ENCODE measurements at regions of chr17 and their contacts with region 1.

Region 1: DNA sequence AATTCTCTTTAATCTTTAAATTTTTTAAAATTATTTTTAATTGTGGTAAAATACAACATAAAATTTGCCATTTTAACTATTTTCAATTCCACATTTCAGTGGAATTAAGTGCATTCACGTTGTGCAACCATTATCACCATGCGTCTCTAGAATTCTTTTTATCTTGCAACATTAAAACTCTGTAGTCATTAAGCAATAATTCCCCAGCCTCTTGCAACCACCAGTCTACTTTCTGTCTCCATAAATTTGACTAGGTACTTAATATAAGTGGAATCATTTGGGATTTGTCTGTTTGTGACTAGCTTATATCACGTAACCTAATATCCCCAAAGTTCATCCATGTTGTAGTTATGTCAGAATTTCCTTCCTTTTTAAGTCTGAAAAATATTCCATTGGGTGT is 79.1 kb downstream of the TAOK1 start:
- DNase-seq: no peak
- ATAC-seq: no peak
- H3K4me3 ChIP-seq: no peak overlapping the region
- H3K27ac ChIP-seq: no peak overlapping the region
- H3K4me1 ChIP-seq: no peaks in the 10 kb centered on the region
- H3K27me3 ChIP-seq: no peaks in the 10 kb centered on the region
- CTCF ChIP-seq: no peak

Region 2: DNA sequence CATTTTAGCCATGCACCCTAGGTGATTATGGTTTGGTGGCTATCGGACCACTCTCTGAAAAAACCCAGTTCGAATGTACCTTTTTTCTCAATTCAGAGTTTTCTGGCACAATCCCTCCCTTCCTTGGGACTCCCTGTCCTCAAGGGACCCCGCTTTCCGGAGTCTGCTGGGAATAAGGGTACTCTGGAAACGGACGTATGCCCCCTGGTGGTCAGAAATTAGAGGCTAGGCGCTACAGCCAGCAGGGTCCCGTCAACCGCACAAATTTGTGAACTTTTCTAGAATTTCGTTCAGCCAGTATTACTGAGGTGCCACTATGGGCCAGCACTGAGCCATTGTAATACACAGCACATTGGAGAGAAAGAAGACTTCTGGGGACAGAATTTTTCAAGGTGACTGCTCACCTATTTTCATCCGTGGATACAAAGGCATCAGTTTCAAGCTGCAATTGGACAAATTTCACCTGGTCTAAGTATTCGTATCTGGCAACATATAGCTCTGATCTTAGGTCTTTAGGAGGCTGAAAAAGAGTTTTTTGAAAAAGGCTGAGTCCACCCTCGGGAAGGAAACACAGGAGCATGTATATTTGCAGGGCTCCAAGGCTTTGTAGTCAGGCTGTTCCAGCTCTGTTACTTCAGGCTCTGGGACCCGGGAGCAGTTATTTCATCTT is 249.8 kb before region 1 on chr17:
- intact Hi-C with region 1: no loop called
- DNase-seq: peak; percentile 56 to 83
- ATAC-seq: peak; percentile 87 to 96 (median 91)
- H3K4me3 ChIP-seq: no peak overlapping the region
- H3K27ac ChIP-seq: no peak overlapping the region
- H3K4me1 ChIP-seq: peaks cover 0 to 11% (median 8%) of the 10 kb centered on the region in 9 donors
- H3K27me3 ChIP-seq: no peaks in the 10 kb centered on the region
- CTCF ChIP-seq: peak; percentile 88 to 97 (median 92)

Region 3: GRCh38 chr17:29389982-29390850 is 79.1 kb before region 1 on chr17 and contains the start of gene TAOK1:
- intact Hi-C with region 1: loop called in 1 of 10 experiments (anchors 10 kb)
- DNase-seq: peak; percentile 99 to 100
- ATAC-seq: peak; percentile 98 to 100 (median 99)
- H3K4me3 ChIP-seq: peak within 1 kb of the TSS; percentile 73 to 99 (median 88)
- H3K27ac ChIP-seq: peak within 1 kb of the TSS; percentile 96 to 99 (median 98)
- H3K4me1 ChIP-seq: peaks cover 4 to 53% (median 32%) of the 10 kb centered on the region in 9 donors
- H3K27me3 ChIP-seq: no peaks in the 10 kb centered on the region
- CTCF ChIP-seq: no peak
- total RNA-seq, gene TAOK1: 49.6 to 86.9 (median 70.7) TPM